Stomach (tissue), 19 donors: ENCODE measurements at regions of chr9 and their contacts with region 1.

Region 1: DNA sequence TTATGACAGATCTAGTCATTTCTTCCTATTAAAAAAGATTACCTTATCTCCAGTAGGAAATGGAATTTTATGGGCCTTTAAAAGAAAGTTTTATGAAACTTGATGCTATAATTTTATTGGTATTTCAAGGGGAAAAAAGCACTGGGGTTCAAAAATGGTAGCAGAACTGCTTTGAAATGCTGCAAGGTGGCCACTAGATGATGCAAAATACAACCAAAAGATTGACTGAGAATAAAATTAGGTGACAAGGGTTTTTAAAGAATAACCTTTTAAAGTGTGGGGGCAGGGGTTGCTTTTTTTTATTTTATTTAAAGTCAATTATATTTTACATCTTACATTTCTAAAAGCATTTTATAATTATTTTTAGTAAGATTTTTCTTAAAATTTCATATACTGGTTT is 61.7 kb downstream of the KLF9 start:
- DNase-seq: no peak
- H3K4me3 ChIP-seq: no peak overlapping the region
- H3K27ac ChIP-seq: peak overlapping the region in 1 of 5 donors; percentile 42
- H3K4me1 ChIP-seq: peaks cover 0 to 8% (median 0%) of the 10 kb centered on the region in 4 donors
- H3K27me3 ChIP-seq: no peaks in the 10 kb centered on the region
- CTCF ChIP-seq: peak in 5 of 7 experiments; percentile 37 to 58 (median 44)
- EP300 ChIP-seq: no peak
- POLR2A ChIP-seq: no peak

Region 2: DNA sequence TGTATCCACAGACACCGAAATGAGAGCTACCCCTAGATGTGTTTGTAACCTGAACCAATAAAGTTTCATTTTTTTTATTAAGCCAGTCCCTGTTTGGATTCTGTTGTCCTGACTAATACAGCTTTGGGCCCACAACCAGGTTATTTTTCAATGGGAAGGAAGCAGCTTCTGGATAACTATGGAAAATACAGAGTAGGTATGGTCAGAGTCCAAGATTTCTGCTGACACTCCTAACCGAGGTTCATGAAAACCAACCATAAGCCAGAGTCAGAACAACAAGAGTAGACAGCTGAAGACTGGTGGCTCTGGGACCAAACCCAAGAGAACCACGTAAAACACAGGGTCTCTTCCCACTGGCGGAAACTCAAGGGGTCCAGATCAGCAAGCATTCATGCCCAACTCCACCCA is 50.8 kb after region 1 on chr9:
- intact Hi-C with region 1: loop called (anchors 5 kb)
- DNase-seq: no peak
- H3K4me3 ChIP-seq: peak overlapping the region in 1 of 4 donors; percentile 4
- H3K27ac ChIP-seq: peak overlapping the region; percentile 59 to 80 (median 76)
- H3K4me1 ChIP-seq: peaks cover 84 to 100% (median 96%) of the 10 kb centered on the region in 4 donors
- H3K27me3 ChIP-seq: no peaks in the 10 kb centered on the region
- CTCF ChIP-seq: no peak
- EP300 ChIP-seq: no peak
- POLR2A ChIP-seq: no peak

Region 3: DNA sequence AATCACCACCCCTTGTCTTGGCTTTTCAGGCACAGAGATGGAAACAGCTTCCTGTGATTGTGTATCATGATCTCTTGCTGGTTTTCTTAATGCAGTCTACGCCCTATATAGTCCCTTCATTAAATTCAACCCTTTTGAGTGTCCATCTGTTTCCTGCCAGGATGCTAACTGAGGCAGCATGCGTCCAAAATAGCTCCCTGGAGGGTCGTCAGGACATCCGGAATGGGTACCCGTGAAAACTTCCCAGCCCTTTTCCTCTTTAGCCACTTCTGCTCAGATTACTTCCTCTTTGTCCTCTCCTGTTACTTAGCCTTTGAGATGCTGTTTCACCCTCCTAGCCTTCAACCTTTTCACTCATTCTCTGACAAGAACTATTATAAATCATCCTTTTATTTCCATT is 141.4 kb after region 1 on chr9:
- intact Hi-C with region 1: loop called (anchors 10 kb)
- DNase-seq: peak in 1 of 2 donors; percentile 42
- H3K4me3 ChIP-seq: no peak overlapping the region
- H3K27ac ChIP-seq: peak overlapping the region in 3 of 5 donors; percentile 24 to 38 (median 38)
- H3K4me1 ChIP-seq: peaks cover 0 to 24% (median 18%) of the 10 kb centered on the region in 4 donors
- H3K27me3 ChIP-seq: no peaks in the 10 kb centered on the region
- CTCF ChIP-seq: no peak
- EP300 ChIP-seq: no peak
- POLR2A ChIP-seq: no peak